GM12878 (cell line): ENCODE measurements at regions of chr14 and their contacts with region 1.

Region 1: GRCh38 chr14:24366721-24367513 is 1.1 kb upstream of the NFATC4 start:
- DNase-seq: peak; percentile 34
- ATAC-seq: peak; percentile 79
- H3K4me3 ChIP-seq: peak overlapping the region; percentile 53; the same call in 1 of the 2 replicates
- H3K27ac ChIP-seq: peak overlapping the region; percentile 48
- H3K4me1 ChIP-seq: peaks cover 16% of the 10 kb centered on the region
- H3K27me3 ChIP-seq: peaks cover 1 to 6% of the 10 kb centered on the region in 2 experiments
- CTCF ChIP-seq: no peak
- EP300 ChIP-seq: peak; percentile 29 to 31; a peak in 1 of 4 replicates
- POLR2A ChIP-seq: no peak
- RAD21 ChIP-seq: no peak

Region 2: GRCh38 chr14:24339284-24340151 is 27.4 kb before region 1 on chr14 and contains the start of gene RIPK3:
- CTCF ChIA-PET with region 1: interaction called, 37 read pairs
- POLR2A ChIA-PET with region 1: interaction called, 5 read pairs
- RAD21 ChIA-PET with region 1: interaction called, 15 read pairs
- SMC1A ChIA-PET with region 1: interaction called, 6 read pairs
- in situ Hi-C with region 1: no loop called
- intact Hi-C with region 1: loop called (anchors 5 kb)
- DNase-seq: peak; percentile 36
- ATAC-seq: peak; percentile 95
- H3K4me3 ChIP-seq: peak within 1 kb of the TSS; percentile 93
- H3K27ac ChIP-seq: peak within 1 kb of the TSS; percentile 34; the same call in 1 of the 2 replicates
- H3K4me1 ChIP-seq: peaks cover 6% of the 10 kb centered on the region; the same call in 1 of the 2 replicates
- H3K27me3 ChIP-seq: peaks cover 0 to 3% of the 10 kb centered on the region in 2 experiments; a peak in 1 of 4 replicates
- CTCF ChIP-seq: no peak
- EP300 ChIP-seq: no peak
- POLR2A ChIP-seq: peak; percentile 63
- RAD21 ChIP-seq: no peak
- polyA plus RNA-seq, gene RIPK3: 2.0 to 2.7 TPM

Region 3: GRCh38 chr14:24351517-24351916 is 15.4 kb before region 1 on chr14:
- CTCF ChIA-PET with region 1: interaction called, 17 read pairs
- POLR2A ChIA-PET with region 1: interaction called, 3 read pairs
- RAD21 ChIA-PET with region 1: no interaction called
- SMC1A ChIA-PET with region 1: interaction called, 5 read pairs
- in situ Hi-C with region 1: no loop called
- intact Hi-C with region 1: no loop called
- DNase-seq: no peak
- ATAC-seq: no peak; the same call in 2 of the 3 replicates
- H3K4me3 ChIP-seq: no peak overlapping the region
- H3K27ac ChIP-seq: no peak overlapping the region
- H3K4me1 ChIP-seq: no peaks in the 10 kb centered on the region
- H3K27me3 ChIP-seq: peaks cover 1 to 4% of the 10 kb centered on the region in 2 experiments; a peak in 3 of 4 replicates
- CTCF ChIP-seq: no peak
- EP300 ChIP-seq: no peak
- POLR2A ChIP-seq: no peak
- RAD21 ChIP-seq: no peak

Region 4: GRCh38 chr14:24411443-24412389 is 44.8 kb after region 1 on chr14:
- CTCF ChIA-PET with region 1: interaction called, 15 read pairs
- POLR2A ChIA-PET with region 1: no interaction called
- RAD21 ChIA-PET with region 1: interaction called, 6 read pairs
- SMC1A ChIA-PET with region 1: interaction called, 17 read pairs
- in situ Hi-C with region 1: no loop called
- intact Hi-C with region 1: loop called (anchors 5 kb)
- DNase-seq: no peak
- ATAC-seq: peak; percentile 87
- H3K4me3 ChIP-seq: no peak overlapping the region
- H3K27ac ChIP-seq: no peak overlapping the region
- H3K4me1 ChIP-seq: no peaks in the 10 kb centered on the region
- H3K27me3 ChIP-seq: peaks cover 1 to 5% of the 10 kb centered on the region in 2 experiments; a peak in 2 of 4 replicates
- CTCF ChIP-seq: peak; percentile 54 to 79 (median 58)
- EP300 ChIP-seq: no peak
- POLR2A ChIP-seq: no peak
- RAD21 ChIP-seq: peak; percentile 62

Region 5: GRCh38 chr14:24425704-24426103 is 58.8 kb after region 1 on chr14:
- CTCF ChIA-PET with region 1: interaction called, 163 read pairs
- POLR2A ChIA-PET with region 1: interaction called, 61 read pairs
- RAD21 ChIA-PET with region 1: interaction called, 122 read pairs
- SMC1A ChIA-PET with region 1: interaction called, 79 read pairs
- in situ Hi-C with region 1: loop called (anchors 5 kb)
- intact Hi-C with region 1: no loop called
- DNase-seq: no peak
- ATAC-seq: no peak
- H3K4me3 ChIP-seq: no peak overlapping the region
- H3K27ac ChIP-seq: no peak overlapping the region
- H3K4me1 ChIP-seq: no peaks in the 10 kb centered on the region; the same call in 1 of the 2 replicates
- H3K27me3 ChIP-seq: no peaks in the 10 kb centered on the region
- CTCF ChIP-seq: no peak
- EP300 ChIP-seq: no peak
- POLR2A ChIP-seq: no peak
- RAD21 ChIP-seq: no peak

Region 6: DNA sequence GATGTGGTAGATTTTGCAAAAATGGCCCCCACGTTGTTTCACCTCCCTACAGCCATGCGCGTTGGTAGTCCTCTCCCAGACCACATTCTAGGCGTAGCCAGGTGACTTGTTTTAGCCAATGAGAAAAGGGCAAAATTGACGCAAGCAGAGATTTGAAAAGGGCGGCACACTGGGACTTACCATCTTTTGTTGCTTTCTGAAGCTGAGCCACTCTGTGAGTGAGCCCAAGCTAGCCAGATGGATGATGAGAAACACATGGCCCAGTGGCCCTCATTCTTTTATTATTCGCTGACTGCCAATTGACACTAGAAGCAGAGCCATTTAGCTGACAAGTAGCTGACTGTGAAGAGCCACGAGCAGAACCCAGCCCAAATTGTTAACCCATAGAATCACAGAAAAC is 409.0 kb after region 1 on chr14:
- CTCF ChIA-PET with region 1: no interaction called
- POLR2A ChIA-PET with region 1: no interaction called
- RAD21 ChIA-PET with region 1: no interaction called
- SMC1A ChIA-PET with region 1: no interaction called
- in situ Hi-C with region 1: no loop called
- intact Hi-C with region 1: no loop called
- DNase-seq: no peak
- ATAC-seq: no peak
- H3K4me3 ChIP-seq: no peak overlapping the region
- H3K27ac ChIP-seq: no peak overlapping the region
- H3K4me1 ChIP-seq: no peaks in the 10 kb centered on the region
- H3K27me3 ChIP-seq: no peaks in the 10 kb centered on the region
- CTCF ChIP-seq: no peak
- EP300 ChIP-seq: no peak
- POLR2A ChIP-seq: no peak
- RAD21 ChIP-seq: no peak

Region 7: GRCh38 chr14:24875991-24876878 is 509.3 kb after region 1 on chr14:
- CTCF ChIA-PET with region 1: no interaction called
- POLR2A ChIA-PET with region 1: no interaction called
- RAD21 ChIA-PET with region 1: no interaction called
- SMC1A ChIA-PET with region 1: no interaction called
- in situ Hi-C with region 1: no loop called
- intact Hi-C with region 1: no loop called
- DNase-seq: no peak
- ATAC-seq: peak; percentile 38
- H3K4me3 ChIP-seq: no peak overlapping the region
- H3K27ac ChIP-seq: no peak overlapping the region
- H3K4me1 ChIP-seq: no peaks in the 10 kb centered on the region
- H3K27me3 ChIP-seq: no peaks in the 10 kb centered on the region
- CTCF ChIP-seq: no peak
- EP300 ChIP-seq: no peak
- POLR2A ChIP-seq: no peak
- RAD21 ChIP-seq: no peak